GM10248 (cell line): ENCODE measurements at regions of chr3 and their contacts with region 1.

Region 1: GRCh38 chr3:153970741-153971347 is 150.3 kb upstream of the ARHGEF26 start:
- DNase-seq: no peak
- CTCF ChIP-seq: peak; percentile 49

Region 2: GRCh38 chr3:153958635-153959595 is 11.9 kb before region 1 on chr3:
- CTCF ChIA-PET with region 1: interaction called, 20 read pairs
- POLR2A ChIA-PET with region 1: no interaction called
- DNase-seq: no peak
- CTCF ChIP-seq: no peak